Mammary epithelial cell (primary cell): ENCODE measurements at regions of chr20 and their contacts with region 1.

Region 1: GRCh38 chr20:32652739-32653526 is 20.8 kb downstream of the C20orf203 start:
- DNase-seq: peak; percentile 67
- H3K4me3 ChIP-seq: no peak overlapping the region
- H3K27ac ChIP-seq: no peak overlapping the region
- H3K4me1 ChIP-seq: peaks cover 11% of the 10 kb centered on the region
- H3K27me3 ChIP-seq: no peaks in the 10 kb centered on the region
- CTCF ChIP-seq: peak; percentile 89 to 92

Region 2: GRCh38 chr20:31822421-31823330 is 830.3 kb before region 1 on chr20:
- CTCF ChIA-PET with region 1: no interaction called
- dilution Hi-C with region 1: no loop called
- in situ Hi-C with region 1: loop called in 1 of 2 experiments (anchors 25 kb)
- intact Hi-C with region 1: loop called (anchors 2 kb)
- DNase-seq: peak; percentile 29
- H3K4me3 ChIP-seq: no peak overlapping the region
- H3K27ac ChIP-seq: no peak overlapping the region
- H3K4me1 ChIP-seq: no peaks in the 10 kb centered on the region
- H3K27me3 ChIP-seq: no peaks in the 10 kb centered on the region
- CTCF ChIP-seq: peak; percentile 78 to 96

Region 3: DNA sequence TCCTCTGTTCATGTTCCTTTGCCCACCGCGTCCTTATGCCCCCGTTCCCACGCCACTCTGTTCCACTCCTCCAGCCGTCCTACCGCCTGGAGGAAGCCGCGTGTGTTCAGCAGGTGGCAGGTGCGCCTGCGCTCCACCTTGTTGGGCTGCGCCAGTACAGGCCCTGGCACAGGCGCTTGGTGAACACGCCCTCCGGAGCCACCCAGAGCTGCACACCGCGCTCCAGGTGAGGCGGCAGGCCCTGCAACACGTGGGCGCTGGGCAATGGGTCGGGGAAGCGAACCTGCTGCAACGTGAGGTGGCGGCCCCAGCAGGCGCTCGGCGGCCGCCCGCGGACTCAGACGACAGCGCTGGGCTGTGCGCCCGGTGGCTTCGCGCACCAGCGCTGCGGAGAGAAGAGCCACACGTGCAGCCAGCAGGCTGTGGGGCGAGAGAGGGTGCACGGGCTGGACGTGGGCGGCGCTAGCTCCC is 803.4 kb before region 1 on chr20:
- CTCF ChIA-PET with region 1: no interaction called
- dilution Hi-C with region 1: no loop called
- in situ Hi-C with region 1: loop called in 1 of 2 experiments (anchors 25 kb)
- intact Hi-C with region 1: loop called (anchors 2 kb)
- DNase-seq: peak; percentile 22
- H3K4me3 ChIP-seq: no peak overlapping the region
- H3K27ac ChIP-seq: no peak overlapping the region
- H3K4me1 ChIP-seq: peaks cover 17% of the 10 kb centered on the region
- H3K27me3 ChIP-seq: peaks cover 10% of the 10 kb centered on the region
- CTCF ChIP-seq: no peak

Region 4: GRCh38 chr20:32031007-32031958 is 621.6 kb before region 1 on chr20:
- CTCF ChIA-PET with region 1: no interaction called
- dilution Hi-C with region 1: no loop called
- in situ Hi-C with region 1: no loop called
- intact Hi-C with region 1: loop called (anchors 1 kb)
- DNase-seq: peak; percentile 66
- H3K4me3 ChIP-seq: peak overlapping the region in 1 of 3 experiments; percentile 23
- H3K27ac ChIP-seq: no peak overlapping the region
- H3K4me1 ChIP-seq: peaks cover 5% of the 10 kb centered on the region
- H3K27me3 ChIP-seq: peaks cover 3% of the 10 kb centered on the region
- CTCF ChIP-seq: peak; percentile 72 to 88

Region 5: GRCh38 chr20:32336918-32337347 is 316.0 kb before region 1 on chr20:
- CTCF ChIA-PET with region 1: no interaction called
- dilution Hi-C with region 1: no loop called
- in situ Hi-C with region 1: no loop called
- intact Hi-C with region 1: loop called (anchors 2 kb)
- DNase-seq: no peak
- H3K4me3 ChIP-seq: no peak overlapping the region
- H3K27ac ChIP-seq: no peak overlapping the region
- H3K4me1 ChIP-seq: peaks cover 16% of the 10 kb centered on the region
- H3K27me3 ChIP-seq: no peaks in the 10 kb centered on the region
- CTCF ChIP-seq: peak; percentile 38 to 61

Region 6: DNA sequence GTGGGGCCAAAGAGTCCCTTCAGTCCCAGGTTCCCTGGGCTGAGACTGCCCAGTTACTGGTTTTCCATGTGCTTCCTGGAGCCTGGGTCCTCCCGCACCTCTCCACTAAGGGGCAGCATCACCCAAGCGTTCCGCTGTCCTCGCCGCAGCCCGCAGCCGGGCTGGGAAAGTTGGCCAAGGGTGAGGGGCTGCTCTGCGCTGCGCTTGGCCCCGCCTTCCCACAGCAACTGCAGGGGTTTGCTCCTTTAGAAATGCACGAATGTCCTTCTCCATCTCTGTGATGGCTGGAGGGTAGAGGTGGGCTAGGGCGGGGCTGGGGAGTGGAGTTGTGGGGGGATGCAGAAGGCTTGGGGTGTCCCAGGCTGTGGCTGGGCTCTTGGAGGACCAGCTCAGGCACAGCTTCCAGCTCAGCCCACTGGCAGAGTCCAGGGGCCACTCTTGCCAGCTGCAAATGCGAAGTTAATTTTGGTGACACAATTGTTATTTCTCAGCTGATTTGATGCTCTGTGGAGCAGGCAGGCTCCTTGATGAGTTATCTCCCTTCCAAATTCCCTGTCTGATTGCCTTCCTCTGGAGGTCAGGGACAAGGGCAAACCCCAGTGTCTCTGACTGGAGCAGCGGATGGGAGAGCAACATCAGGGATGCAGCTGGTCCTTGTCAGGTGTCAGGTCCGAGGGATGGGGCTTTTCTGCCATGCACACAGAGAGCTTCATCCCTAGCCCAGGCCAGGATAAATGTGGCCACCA is 131.0 kb before region 1 on chr20:
- CTCF ChIA-PET with region 1: interaction called, 6 read pairs
- dilution Hi-C with region 1: loop called (anchors 5 kb)
- in situ Hi-C with region 1: loop called in 1 of 2 experiments (anchors 5 kb)
- intact Hi-C with region 1: loop called (anchors 1 kb)
- DNase-seq: no peak
- H3K4me3 ChIP-seq: no peak overlapping the region
- H3K27ac ChIP-seq: no peak overlapping the region
- H3K4me1 ChIP-seq: peaks cover 9% of the 10 kb centered on the region
- H3K27me3 ChIP-seq: no peaks in the 10 kb centered on the region
- CTCF ChIP-seq: peak; percentile 78 to 87